Activated CD4-positive, alpha-beta T cell treated with anti-CD3 and anti-CD28 coated beads for 36 hours (primary cell): ENCODE measurements at regions of chr1 and their contacts with region 1.

Region 1: DNA sequence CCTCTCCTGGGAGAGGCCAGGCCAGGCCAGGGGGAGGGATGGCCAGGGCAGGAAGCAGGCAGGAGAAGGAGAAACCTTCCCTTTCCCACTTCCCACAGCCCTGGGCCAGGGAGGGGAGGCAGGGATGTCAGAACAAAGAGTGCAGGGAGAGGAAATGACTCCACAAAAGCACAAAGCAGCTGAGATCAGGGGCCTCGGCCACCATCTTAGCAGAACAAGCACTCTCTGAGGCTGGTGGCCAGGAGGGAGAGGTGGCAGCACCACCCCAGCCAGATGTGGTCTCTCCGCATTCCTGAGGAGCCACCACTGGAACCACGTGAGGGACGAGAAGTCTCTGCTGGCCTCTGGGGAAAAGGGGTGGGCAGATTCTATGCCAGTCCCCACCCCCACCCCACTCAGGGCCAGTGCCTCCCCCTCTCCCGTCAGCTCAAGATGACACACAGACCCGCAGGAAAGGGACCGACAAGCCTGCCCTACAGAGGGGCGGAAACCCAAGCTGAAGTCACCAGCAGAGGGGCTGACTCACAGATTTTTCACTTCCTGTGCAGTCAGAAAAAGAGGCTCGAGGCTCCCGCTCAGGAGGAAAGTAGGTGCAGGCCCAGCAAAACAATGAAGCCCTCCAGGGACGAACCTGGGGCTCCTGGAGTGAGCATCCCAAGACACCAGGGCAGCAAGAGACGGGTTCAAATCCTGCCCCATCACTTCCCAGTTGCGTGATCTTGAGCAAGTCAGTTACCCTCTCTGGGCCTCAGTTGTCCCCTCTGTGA is 24.1 kb upstream of the ALDH4A1 start:
- DNase-seq: peak; percentile 94
- ATAC-seq: peak; percentile 89
- H3K4me3 Mint-ChIP-seq: peak overlapping the region; percentile 69
- H3K27ac Mint-ChIP-seq: peak overlapping the region; percentile 99
- H3K4me1 Mint-ChIP-seq: peaks cover 92% of the 10 kb centered on the region
- H3K27me3 Mint-ChIP-seq: no peaks in the 10 kb centered on the region

Region 2: GRCh38 chr1:18913065-18913835 is 13.2 kb before region 1 on chr1:
- CTCF ChIA-PET with region 1: interaction called, 62 read pairs
- POLR2A ChIA-PET with region 1: interaction called, 4 read pairs
- intact Hi-C with region 1: loop called in 1 of 2 experiments (anchors 1 kb)
- DNase-seq: peak; percentile 87
- ATAC-seq: peak; percentile 86
- H3K4me3 Mint-ChIP-seq: no peak overlapping the region
- H3K27ac Mint-ChIP-seq: peak overlapping the region; percentile 70
- H3K4me1 Mint-ChIP-seq: peaks cover 28% of the 10 kb centered on the region
- H3K27me3 Mint-ChIP-seq: no peaks in the 10 kb centered on the region

Region 3: DNA sequence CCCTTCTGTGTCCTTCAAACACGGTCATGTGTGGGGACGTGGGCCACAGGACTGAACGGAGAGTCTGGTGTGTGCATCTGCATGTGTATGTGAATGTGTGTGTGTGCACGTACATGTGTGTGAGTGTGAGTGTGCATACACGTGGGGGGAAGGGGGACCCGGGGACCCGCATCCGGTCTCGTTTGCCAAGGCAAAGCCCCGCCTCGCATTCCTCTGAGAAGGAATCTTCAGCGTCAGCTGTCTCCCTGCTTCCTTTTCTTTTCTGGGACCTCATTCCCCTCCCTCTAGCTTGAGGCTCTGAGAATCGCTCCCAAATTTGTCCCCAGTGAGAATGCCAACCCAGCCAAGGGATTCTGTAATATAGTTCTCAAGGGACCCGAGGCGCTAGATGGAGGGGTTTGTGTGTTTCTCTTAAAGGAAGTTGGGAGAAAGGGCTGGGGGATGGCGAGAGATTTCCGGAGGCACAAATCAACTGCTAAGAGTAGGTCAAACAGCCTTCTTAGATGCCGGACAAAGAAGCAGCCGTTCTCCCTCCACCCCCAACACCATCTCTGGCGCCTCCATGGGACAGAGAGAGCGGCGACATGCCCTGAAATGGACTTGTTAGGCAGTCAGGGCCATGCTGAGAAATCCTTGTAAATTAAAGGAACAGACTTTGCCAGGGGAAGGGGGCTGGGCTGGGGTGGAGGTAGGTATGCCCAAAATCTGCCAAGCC is 23.3 kb after region 1 on chr1:
- CTCF ChIA-PET with region 1: interaction called, 66 read pairs
- POLR2A ChIA-PET with region 1: interaction called, 43 read pairs
- intact Hi-C with region 1: loop called (anchors 1 kb)
- DNase-seq: peak; percentile 64
- ATAC-seq: no peak
- H3K4me3 Mint-ChIP-seq: peak overlapping the region; percentile 86
- H3K27ac Mint-ChIP-seq: peak overlapping the region; percentile 92
- H3K4me1 Mint-ChIP-seq: peaks cover 93% of the 10 kb centered on the region
- H3K27me3 Mint-ChIP-seq: no peaks in the 10 kb centered on the region

Region 4: DNA sequence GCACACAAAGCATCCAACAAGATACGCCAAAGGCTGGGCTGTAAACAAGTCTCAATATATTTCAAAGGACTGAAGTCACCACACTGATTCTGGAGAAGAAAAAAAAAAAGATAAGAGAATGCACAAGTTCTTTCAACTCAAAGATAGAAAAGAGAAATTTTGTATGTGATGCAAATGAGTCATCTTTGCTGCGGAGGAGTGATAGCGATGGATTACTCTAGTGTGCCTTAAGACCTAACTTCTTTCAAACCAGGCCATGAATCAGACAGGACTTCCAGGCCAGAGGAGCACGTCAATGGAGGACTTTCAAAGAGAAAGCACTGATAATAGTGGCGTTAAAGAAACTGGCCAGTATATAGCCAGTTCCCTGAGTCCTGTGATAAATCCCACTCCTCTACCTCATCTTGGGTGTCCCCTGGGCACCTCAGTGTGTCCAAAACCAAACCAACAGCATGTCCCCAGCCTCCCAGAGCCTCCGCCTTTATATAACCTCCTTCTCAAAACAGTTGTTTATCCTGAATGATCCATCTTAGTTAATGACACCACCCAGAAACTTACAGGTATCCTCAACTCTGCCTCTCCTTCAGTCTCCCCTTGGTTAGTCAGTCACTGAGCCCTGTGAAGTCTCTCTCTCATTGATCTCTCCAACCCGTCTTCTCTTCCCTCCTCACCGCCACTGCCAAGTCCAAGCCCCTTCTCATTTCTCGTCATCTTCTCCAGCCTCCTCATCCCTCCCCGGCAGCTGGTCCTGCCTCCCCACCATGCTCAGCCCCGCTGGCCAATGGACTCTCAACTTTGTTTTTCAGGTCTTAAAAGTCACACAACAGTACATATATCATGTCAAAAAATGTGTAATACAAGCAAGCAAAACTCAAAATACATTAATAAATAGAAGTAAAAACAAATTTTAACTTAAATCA is 77.1 kb after region 1 on chr1:
- CTCF ChIA-PET with region 1: no interaction called
- POLR2A ChIA-PET with region 1: no interaction called
- intact Hi-C with region 1: loop called in 1 of 2 experiments (anchors 2 kb)
- DNase-seq: peak; percentile 58
- ATAC-seq: peak; percentile 96
- H3K4me3 Mint-ChIP-seq: peak overlapping the region; percentile 33
- H3K27ac Mint-ChIP-seq: peak overlapping the region; percentile 91
- H3K4me1 Mint-ChIP-seq: peaks cover 35% of the 10 kb centered on the region
- H3K27me3 Mint-ChIP-seq: peaks cover 8% of the 10 kb centered on the region

Region 5: DNA sequence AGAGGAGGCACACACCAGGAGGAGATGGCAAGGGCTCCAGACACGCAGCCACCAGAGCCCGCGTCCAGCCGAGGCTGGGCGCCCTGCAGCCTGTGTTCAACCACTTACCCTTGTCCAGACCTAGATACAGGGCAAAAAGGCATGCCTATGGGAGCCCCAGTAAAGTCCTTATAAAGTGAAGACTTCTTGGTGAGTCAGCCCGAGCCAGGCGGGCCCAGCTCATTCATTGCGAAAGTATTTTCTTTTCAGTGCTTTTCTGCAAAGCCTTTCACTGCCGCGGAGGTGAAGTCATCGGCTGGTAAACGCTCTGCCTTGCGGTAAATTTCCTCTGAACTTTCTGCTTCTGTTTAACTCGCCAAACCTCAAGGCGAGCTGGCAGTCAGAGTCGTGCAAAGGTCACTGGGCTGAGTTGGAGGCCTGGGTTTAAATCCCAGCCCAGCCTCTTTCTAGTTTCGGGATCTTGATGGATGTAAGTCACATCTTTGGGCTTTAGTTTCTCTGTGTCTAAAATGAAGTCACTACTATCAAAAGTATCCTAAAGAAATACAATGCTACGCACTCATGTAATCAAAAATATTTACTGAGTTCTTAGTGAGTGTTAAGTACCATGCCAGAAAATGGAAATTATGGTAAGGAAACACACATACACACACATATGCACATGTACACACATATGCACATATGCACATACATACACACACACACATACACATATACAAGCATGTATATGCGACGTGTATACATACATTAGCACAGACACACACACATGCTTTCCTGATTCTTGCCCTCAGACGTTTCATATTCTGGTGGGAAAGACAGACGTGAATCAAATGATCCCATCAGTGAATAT is 84.7 kb after region 1 on chr1:
- CTCF ChIA-PET with region 1: interaction called, 3 read pairs
- POLR2A ChIA-PET with region 1: interaction called, 16 read pairs
- intact Hi-C with region 1: loop called in 1 of 2 experiments (anchors 1 kb)
- DNase-seq: peak; percentile 93
- ATAC-seq: peak; percentile 97
- H3K4me3 Mint-ChIP-seq: peak overlapping the region; percentile 12
- H3K27ac Mint-ChIP-seq: peak overlapping the region; percentile 87
- H3K4me1 Mint-ChIP-seq: peaks cover 36% of the 10 kb centered on the region
- H3K27me3 Mint-ChIP-seq: peaks cover 2% of the 10 kb centered on the region

Region 6: DNA sequence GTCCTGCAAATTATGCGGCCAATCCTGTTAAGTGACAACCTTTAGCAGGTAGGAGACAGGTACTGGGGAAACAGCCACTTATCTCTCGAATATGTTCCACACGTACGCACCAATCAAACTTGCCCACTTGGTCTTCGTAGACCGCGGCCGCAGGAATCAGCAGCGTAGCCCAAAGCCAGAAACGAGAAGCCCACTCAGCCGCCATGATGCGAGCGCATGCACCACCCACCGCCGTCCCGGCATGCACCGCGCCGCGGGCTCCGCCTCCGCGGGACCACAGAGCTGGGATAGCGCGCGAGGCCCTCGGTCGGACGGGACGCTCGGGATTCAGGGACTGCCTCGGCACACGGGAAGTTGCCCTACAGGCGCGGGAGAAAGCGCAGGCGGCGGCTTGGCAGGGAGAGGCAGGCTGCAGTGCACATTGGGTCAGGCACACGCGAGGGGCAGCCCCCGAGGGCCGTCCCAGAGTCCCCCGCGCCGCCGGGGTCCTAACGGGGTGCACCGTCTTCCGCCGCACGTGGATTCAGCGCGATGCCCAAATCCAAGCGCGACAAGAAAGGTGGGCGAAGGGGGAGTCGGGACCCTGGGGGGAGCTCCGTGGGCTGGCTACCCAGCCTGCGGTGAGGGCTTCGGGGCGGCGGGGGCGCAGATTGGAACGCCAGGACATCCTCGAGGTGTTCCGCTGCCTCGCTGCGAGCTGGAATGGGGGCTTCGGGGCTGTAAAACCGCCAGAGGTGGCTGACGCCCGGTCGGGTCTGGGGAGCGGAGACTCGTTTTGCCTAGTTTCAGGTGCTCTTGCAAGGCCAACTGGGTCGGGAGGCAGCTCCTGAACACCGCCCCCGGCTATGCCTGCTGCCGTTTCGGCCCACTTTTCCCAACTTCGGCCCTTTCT is 325.1 kb after region 1 on chr1 and contains the starts of genes EMC1 and MRTO4:
- CTCF ChIA-PET with region 1: no interaction called
- POLR2A ChIA-PET with region 1: no interaction called
- intact Hi-C with region 1: loop called in 1 of 2 experiments (anchors 1 kb)
- DNase-seq: peak; percentile 94
- ATAC-seq: peak; percentile 87
- H3K4me3 Mint-ChIP-seq: peak within 1 kb of the TSS; percentile 99
- H3K27ac Mint-ChIP-seq: peak within 1 kb of the TSS; percentile 96
- H3K4me1 Mint-ChIP-seq: peaks cover 45% of the 10 kb centered on the region
- H3K27me3 Mint-ChIP-seq: no peaks in the 10 kb centered on the region
- total RNA-seq, gene EMC1: 45.0 to 59.0 TPM
- total RNA-seq, gene MRTO4: 82.6 to 95.0 TPM